Uterus (tissue), 4 donors: ENCODE measurements at regions of chr2 and their contacts with region 1.

Region 1: GRCh38 chr2:120343433-120344105 is 2.4 kb upstream of the INHBB start:
- DNase-seq: peak; percentile 63 to 71
- H3K4me3 ChIP-seq: no peak overlapping the region
- H3K27ac ChIP-seq: peak overlapping the region in 1 of 2 donors; percentile 60
- H3K4me1 ChIP-seq: no peaks in the 10 kb centered on the region
- H3K27me3 ChIP-seq: peaks cover 11 to 20% of the 10 kb centered on the region in 2 donors
- CTCF ChIP-seq: peak; percentile 69 to 90 (median 85)
- POLR2A ChIP-seq: peak in 1 of 2 donors; percentile 21

Region 2: GRCh38 chr2:119713804-119714490 is 629.6 kb before region 1 on chr2:
- intact Hi-C with region 1: no loop called
- DNase-seq: no peak
- H3K4me3 ChIP-seq: no peak overlapping the region
- H3K27ac ChIP-seq: no peak overlapping the region
- H3K4me1 ChIP-seq: no peaks in the 10 kb centered on the region
- H3K27me3 ChIP-seq: no peaks in the 10 kb centered on the region
- CTCF ChIP-seq: no peak
- POLR2A ChIP-seq: no peak

Region 3: GRCh38 chr2:120503793-120504571 is 160.4 kb after region 1 on chr2:
- intact Hi-C with region 1: loop called (anchors 10 kb)
- DNase-seq: no peak
- H3K4me3 ChIP-seq: no peak overlapping the region
- H3K27ac ChIP-seq: no peak overlapping the region
- H3K4me1 ChIP-seq: no peaks in the 10 kb centered on the region
- H3K27me3 ChIP-seq: no peaks in the 10 kb centered on the region
- CTCF ChIP-seq: no peak
- POLR2A ChIP-seq: no peak

Region 4: DNA sequence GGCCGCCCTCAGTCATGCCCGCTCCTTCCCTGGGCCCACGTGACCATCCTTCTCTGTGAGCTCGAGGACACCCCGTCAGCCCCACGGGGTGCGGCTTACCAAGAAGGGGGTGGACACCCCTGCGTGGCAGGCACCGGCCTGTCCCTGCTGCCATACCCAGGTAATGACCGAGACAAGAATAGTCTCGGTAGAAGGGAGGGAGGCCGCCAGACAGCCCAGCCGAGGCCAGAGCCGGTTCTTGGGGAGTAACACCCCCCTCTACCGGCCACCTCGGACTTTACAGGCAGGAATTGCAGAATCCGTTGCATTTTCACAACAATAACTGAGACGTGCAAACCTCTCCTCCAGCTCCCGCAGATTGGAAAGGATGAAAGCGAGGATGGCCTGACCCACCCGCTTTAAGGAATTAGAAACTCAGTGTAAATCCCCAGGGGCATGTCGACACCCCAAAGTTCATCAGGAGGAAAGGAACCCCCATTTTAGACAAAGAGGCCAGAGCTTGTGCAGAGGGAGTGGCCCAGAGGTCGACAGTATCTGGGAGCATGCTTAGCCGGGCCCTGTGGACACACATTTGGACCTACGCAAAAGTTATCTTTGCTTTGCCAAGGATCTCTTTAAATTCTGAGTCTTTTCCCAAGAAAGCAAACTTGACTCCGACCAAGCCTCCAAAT is 332.0 kb after region 1 on chr2:
- intact Hi-C with region 1: loop called (anchors 5 kb)
- DNase-seq: peak; percentile 38 to 45
- H3K4me3 ChIP-seq: no peak overlapping the region
- H3K27ac ChIP-seq: no peak overlapping the region
- H3K4me1 ChIP-seq: no peaks in the 10 kb centered on the region
- H3K27me3 ChIP-seq: no peaks in the 10 kb centered on the region
- CTCF ChIP-seq: peak; percentile 57 to 70 (median 60)
- POLR2A ChIP-seq: no peak